CD14-positive monocyte (primary cell): ENCODE measurements at regions of chr7 and their contacts with region 1.

Region 1: DNA sequence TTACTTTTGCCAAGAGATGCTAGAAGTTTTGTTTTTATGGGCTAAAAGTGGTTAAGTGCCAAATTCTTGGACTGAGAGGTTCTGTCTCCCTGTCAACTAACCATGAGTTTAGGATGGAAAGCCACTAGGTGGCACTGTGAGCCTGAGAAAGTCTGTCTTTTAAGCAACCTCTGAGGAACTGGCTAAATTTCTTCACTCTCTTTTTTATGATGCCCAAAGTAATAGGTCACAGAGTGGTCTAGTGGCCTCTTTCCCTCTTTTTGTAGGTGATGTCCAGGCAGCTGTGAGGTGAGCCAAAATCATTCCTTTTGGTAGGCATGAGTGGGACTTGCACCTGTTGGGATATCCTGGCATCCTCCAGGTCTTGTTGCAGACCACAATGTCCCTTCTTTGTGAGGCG is 56.8 kb downstream of the SND1 start:
- DNase-seq: peak; percentile 66 to 81 (median 70)
- H3K4me3 ChIP-seq: no peak overlapping the region
- H3K4me3 Mint-ChIP-seq: no peak overlapping the region
- H3K27ac ChIP-seq: no peak overlapping the region
- H3K27ac Mint-ChIP-seq: no peak overlapping the region
- H3K4me1 ChIP-seq: no peaks in the 10 kb centered on the region
- H3K4me1 Mint-ChIP-seq: no peaks in the 10 kb centered on the region
- H3K27me3 ChIP-seq: no peaks in the 10 kb centered on the region
- H3K27me3 Mint-ChIP-seq: no peaks in the 10 kb centered on the region
- CTCF ChIP-seq: peak; percentile 84

Region 2: DNA sequence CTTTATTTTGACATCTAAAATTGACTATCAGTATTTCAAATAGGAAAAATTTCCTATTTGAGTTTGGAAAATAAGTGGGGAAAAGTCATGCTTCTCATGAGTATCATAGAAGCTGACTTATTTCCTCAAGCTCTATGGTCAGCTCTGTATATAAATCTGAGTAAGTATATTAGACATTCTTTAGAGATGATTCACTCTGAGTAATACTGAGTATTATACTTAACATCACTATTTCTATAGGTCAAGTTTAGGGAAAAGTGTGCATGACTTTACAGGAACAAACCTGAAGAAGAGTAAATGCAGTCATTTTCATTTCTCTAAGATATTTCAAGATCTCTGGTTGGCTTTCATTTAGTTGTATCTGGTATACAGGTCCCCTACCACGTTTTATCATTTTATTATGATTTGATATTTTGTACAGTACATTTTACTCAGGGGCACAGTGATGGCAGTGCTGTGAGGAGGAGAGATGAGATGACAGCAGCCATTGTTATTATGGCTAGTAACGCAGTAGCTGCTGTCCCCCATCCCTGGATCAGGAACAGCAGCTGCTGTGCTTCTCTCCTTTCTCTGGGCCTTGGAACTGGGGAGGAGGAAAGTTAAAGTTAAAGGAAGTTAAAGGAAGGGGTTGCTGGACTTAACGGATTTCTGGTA is 41.6 kb before region 1 on chr7:
- intact Hi-C with region 1: no loop called
- DNase-seq: peak in 1 of 3 donors; percentile 23
- H3K4me3 ChIP-seq: no peak overlapping the region
- H3K4me3 Mint-ChIP-seq: no peak overlapping the region
- H3K27ac ChIP-seq: peak overlapping the region in 1 of 2 donors; percentile 70
- H3K27ac Mint-ChIP-seq: peak overlapping the region in 6 of 7 donors; percentile 68 to 95 (median 82)
- H3K4me1 ChIP-seq: peaks cover 18 to 24% of the 10 kb centered on the region in 2 donors
- H3K4me1 Mint-ChIP-seq: peaks cover 30% of the 10 kb centered on the region
- H3K27me3 ChIP-seq: no peaks in the 10 kb centered on the region
- H3K27me3 Mint-ChIP-seq: no peaks in the 10 kb centered on the region
- CTCF ChIP-seq: no peak

Region 3: DNA sequence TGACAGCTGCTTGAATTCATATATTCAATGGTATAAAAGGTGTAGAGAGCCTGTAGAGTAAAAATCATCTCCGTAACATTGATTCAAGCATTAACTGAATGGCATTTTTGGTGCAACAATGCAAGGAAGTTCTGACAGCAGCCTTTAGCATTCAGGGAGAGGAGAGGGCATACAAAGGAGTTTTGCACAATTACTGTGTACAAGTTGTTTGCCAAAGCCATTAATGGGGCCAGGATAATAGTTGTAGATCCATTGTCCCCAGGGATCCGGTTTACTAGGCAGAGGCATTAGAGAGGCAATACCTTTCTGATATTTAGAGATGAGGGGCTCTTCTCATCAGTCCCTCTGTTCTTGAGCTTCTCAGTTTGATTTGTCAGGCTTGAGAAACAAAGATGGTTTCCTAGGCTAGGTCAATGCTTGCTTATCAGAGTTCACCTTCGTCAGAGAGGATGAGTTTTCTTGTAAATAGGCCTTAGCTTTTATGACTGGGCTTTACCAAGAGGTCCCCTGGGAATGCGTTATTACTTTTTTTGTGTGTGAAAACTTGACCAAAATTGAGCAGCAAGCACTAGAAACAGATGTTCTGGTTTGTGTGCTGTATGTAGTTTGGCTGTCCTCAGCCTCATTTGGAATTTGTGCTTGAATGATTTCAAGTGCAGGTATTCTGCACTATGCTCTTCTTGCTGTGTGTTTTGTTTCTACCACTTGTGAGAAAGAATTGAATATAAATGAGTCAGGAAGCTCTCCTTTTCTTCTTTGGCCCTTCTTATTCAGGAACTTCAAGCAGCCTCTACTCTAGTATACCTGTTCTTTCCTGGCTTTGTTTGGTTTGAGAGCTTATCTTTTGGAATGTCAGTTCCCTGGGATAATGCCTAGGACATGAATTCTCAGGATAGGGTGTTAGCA is 24.8 kb before region 1 on chr7:
- intact Hi-C with region 1: no loop called
- DNase-seq: no peak
- H3K4me3 ChIP-seq: no peak overlapping the region
- H3K4me3 Mint-ChIP-seq: no peak overlapping the region
- H3K27ac ChIP-seq: peak overlapping the region in 1 of 2 donors; percentile 52
- H3K27ac Mint-ChIP-seq: peak overlapping the region in 1 of 7 donors; percentile 43
- H3K4me1 ChIP-seq: peaks cover 8 to 10% of the 10 kb centered on the region in 2 donors
- H3K4me1 Mint-ChIP-seq: peaks cover 16% of the 10 kb centered on the region
- H3K27me3 ChIP-seq: no peaks in the 10 kb centered on the region
- H3K27me3 Mint-ChIP-seq: peaks cover 0 to 1% (median 0%) of the 10 kb centered on the region in 3 donors
- CTCF ChIP-seq: no peak

Region 4: DNA sequence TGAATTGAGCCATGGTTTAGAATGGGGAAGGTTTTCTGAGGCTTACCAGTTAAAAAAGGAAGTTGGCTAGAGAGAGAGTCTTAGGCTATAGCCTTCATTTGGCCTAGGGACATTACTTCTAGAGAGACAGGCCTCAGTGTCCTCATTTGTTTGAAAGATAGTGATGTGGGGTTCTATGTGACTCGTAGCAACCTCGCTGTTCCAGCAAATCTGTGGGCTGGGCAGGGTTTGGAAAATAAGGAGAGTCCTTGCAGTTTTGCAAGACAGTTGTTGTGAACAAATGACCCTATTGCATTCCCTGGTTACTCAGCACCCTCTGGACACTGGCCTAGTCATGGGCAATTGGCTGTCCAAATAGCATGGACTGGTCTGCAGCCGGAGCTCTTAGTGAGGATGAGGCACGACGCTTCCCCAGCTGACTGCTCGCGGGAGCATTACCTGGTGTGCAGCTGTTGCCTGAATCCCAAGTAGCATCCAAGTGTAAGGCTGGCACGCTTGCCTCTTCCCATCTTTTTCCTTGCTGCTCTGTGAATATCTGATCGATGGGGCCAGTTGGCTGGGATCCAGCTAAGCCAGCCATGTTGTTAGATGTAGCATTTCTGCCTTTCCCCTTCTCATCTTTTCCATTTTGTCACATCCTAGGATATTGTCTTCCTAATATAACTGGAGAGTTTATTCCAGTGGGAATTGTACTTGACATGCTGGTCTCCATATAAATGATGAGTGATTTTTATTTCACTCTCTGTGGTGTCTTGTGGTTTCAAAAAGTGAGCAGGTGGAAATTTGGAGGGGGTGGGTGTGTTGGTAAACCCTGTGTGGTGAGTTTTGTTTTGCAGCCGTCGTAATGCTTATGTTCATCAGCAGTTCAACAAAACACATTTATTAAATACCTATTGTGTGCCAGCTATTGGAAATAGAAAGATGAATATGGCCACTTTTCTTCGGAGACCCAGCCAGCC is 43.0 kb after region 1 on chr7:
- intact Hi-C with region 1: no loop called
- DNase-seq: peak; percentile 7 to 23 (median 14)
- H3K4me3 ChIP-seq: no peak overlapping the region
- H3K4me3 Mint-ChIP-seq: no peak overlapping the region
- H3K27ac ChIP-seq: peak overlapping the region in 1 of 2 donors; percentile 24
- H3K27ac Mint-ChIP-seq: peak overlapping the region in 3 of 7 donors; percentile 13 to 43 (median 30)
- H3K4me1 ChIP-seq: peaks cover 21 to 25% of the 10 kb centered on the region in 2 donors
- H3K4me1 Mint-ChIP-seq: peaks cover 39% of the 10 kb centered on the region
- H3K27me3 ChIP-seq: no peaks in the 10 kb centered on the region
- H3K27me3 Mint-ChIP-seq: no peaks in the 10 kb centered on the region
- CTCF ChIP-seq: no peak

Region 5: GRCh38 chr7:128322040-128322643 is 613.4 kb after region 1 on chr7:
- intact Hi-C with region 1: loop called (anchors 5 to 10 kb)
- DNase-seq: peak in 2 of 3 donors; percentile 17 to 21
- H3K4me3 ChIP-seq: no peak overlapping the region
- H3K4me3 Mint-ChIP-seq: no peak overlapping the region
- H3K27ac ChIP-seq: no peak overlapping the region
- H3K27ac Mint-ChIP-seq: peak overlapping the region in 1 of 7 donors; percentile 2
- H3K4me1 ChIP-seq: no peaks in the 10 kb centered on the region
- H3K4me1 Mint-ChIP-seq: peaks cover 2% of the 10 kb centered on the region
- H3K27me3 ChIP-seq: no peaks in the 10 kb centered on the region
- H3K27me3 Mint-ChIP-seq: no peaks in the 10 kb centered on the region
- CTCF ChIP-seq: peak; percentile 47

Region 6: GRCh38 chr7:128387216-128388144 is 678.7 kb after region 1 on chr7:
- intact Hi-C with region 1: loop called in 1 of 2 experiments (anchors 5 kb)
- DNase-seq: peak; percentile 51 to 65 (median 62)
- H3K4me3 ChIP-seq: no peak overlapping the region
- H3K4me3 Mint-ChIP-seq: peak overlapping the region in 1 of 2 donors; percentile 63
- H3K27ac ChIP-seq: no peak overlapping the region
- H3K27ac Mint-ChIP-seq: no peak overlapping the region
- H3K4me1 ChIP-seq: peaks cover 11 to 12% of the 10 kb centered on the region in 2 donors
- H3K4me1 Mint-ChIP-seq: peaks cover 23% of the 10 kb centered on the region
- H3K27me3 ChIP-seq: no peaks in the 10 kb centered on the region
- H3K27me3 Mint-ChIP-seq: peaks cover 7 to 15% (median 11%) of the 10 kb centered on the region in 3 donors
- CTCF ChIP-seq: peak; percentile 95